Activated CD4-positive, alpha-beta memory T cell treated with anti-CD3 and anti-CD28 coated beads, Interleukin-2, amount 10 ng/mL, durations not matched to agents 7 days and 5 days (primary cell): ENCODE measurements at regions of chr2 and their contacts with region 1.

Region 1: GRCh38 chr2:190023861-190024260 is 38.7 kb downstream of the MSTN start:
- DNase-seq: no peak
- H3K4me3 Mint-ChIP-seq: no peak overlapping the region
- H3K27ac Mint-ChIP-seq: no peak overlapping the region
- H3K4me1 Mint-ChIP-seq: no peaks in the 10 kb centered on the region
- H3K27me3 Mint-ChIP-seq: peaks cover 15% of the 10 kb centered on the region

Region 2: GRCh38 chr2:190036071-190036470 is 12.2 kb after region 1 on chr2:
- CTCF ChIA-PET with region 1: interaction called, 10 read pairs
- POLR2A ChIA-PET with region 1: no interaction called
- DNase-seq: no peak
- H3K4me3 Mint-ChIP-seq: no peak overlapping the region
- H3K27ac Mint-ChIP-seq: no peak overlapping the region
- H3K4me1 Mint-ChIP-seq: no peaks in the 10 kb centered on the region
- H3K27me3 Mint-ChIP-seq: peaks cover 12% of the 10 kb centered on the region